CD8-positive, alpha-beta T cell (primary cell): ENCODE measurements at regions of chr7 and their contacts with region 1.

Region 1: DNA sequence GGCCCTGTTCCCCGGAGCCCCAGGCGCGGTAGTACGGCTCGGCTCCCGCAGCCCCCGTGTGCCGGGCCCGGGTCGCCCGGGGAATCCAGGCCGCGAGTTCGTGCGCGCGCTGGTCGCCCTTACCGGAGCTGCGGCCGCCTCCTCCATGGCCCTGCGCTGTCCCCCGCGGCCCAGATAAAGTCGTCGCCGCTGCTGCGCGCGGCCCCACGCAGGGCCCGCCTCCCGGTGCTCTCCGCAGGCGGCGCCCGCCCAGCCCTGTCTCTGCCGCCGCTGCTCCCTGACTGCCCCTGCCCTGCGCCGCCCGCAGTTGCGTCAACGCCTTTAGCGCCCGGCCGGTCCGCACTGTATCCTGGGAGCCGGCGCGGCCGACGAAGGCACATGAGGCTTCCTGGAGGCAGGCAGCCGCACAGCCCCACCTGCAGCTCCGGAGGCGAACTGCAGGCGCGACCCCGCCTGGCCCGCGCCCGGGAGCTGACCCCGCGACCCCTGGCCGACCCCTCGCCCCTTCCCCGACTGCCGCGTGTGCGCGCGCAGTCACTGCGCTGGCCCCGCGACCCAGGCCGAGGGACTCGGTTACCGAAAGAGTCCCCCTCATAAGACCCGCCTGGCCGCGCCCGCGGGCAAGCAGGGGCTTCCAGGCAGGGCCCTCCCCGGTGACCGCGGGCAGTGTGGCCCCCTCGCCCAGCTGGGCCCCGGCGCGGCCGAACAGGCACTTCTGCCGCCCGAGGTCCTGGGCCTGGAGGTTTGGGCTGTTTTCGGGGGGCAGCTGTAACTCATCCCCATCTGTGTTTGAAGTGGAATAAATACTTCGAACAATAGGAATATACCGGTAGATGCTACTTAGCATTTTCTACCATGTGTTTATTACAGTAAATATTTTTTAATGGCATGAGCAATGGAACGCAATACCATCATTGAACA is 127.1 kb upstream of the ZNF746 start:
- DNase-seq: peak; percentile 84 to 96 (median 90)
- ATAC-seq: peak; percentile 84
- H3K4me3 ChIP-seq: peak overlapping the region; percentile 68 to 86
- H3K4me3 Mint-ChIP-seq: peak overlapping the region; percentile 93
- H3K27ac ChIP-seq: peak overlapping the region; percentile 46 to 68
- H3K27ac Mint-ChIP-seq: peak overlapping the region; percentile 93
- H3K4me1 ChIP-seq: peaks cover 27% of the 10 kb centered on the region
- H3K4me1 Mint-ChIP-seq: peaks cover 41% of the 10 kb centered on the region
- H3K27me3 ChIP-seq: no peaks in the 10 kb centered on the region
- H3K27me3 Mint-ChIP-seq: peaks cover 3% of the 10 kb centered on the region
- CTCF ChIP-seq: peak; percentile 99

Region 2: DNA sequence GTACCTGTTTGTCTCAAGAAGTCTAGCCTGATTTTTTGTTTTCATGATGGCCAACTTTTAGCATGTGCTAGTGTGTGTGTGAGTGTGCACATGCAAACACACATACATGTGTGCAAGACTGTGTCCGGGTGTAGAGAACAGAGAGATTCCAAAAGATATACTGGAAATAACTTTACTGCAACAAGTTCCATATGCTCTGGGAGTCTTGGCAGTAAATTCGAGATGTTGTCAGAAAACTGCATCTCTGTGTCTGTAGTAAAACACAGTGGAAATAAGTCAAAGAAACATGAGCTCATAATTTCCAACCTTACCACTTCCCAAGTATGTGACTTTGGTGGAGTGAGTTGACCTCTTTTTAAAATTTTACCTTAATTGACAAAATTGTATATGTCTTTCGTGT is 1984.9 kb before region 1 on chr7:
- CTCF ChIA-PET with region 1: no interaction called
- POLR2A ChIA-PET with region 1: no interaction called
- intact Hi-C with region 1: no loop called
- DNase-seq: no peak
- ATAC-seq: no peak
- H3K4me3 ChIP-seq: no peak overlapping the region
- H3K4me3 Mint-ChIP-seq: no peak overlapping the region
- H3K27ac ChIP-seq: no peak overlapping the region
- H3K27ac Mint-ChIP-seq: no peak overlapping the region
- H3K4me1 ChIP-seq: no peaks in the 10 kb centered on the region
- H3K4me1 Mint-ChIP-seq: no peaks in the 10 kb centered on the region
- H3K27me3 ChIP-seq: no peaks in the 10 kb centered on the region
- H3K27me3 Mint-ChIP-seq: no peaks in the 10 kb centered on the region
- CTCF ChIP-seq: no peak

Region 3: DNA sequence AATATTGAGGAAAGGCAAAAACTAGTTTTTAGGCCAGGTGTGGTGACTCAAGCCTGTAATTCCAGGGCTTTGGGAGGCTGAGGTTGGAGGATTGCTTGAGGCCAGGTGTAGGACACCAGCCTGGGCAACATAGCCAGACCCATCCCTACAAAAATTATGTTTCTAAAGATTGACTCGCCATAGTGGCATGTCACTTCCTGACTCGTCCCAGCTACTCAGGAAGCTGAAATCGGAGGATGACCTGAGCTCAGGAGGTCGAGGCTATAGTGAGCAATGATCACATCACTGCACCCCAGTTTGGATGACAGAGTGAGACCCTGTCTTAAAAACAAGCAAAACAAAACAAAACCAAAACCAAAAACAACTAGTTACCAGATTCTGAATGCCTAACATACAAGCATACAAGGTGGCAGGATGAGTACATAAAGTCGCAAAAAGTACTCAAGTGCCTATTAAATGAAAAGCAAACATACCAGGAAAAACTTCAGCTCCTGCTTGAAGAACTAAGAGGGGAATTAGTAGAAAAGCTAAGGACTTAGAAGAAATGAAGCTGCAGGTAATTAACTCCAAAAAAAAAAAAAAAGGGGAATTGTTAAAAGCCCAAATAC is 463.3 kb before region 1 on chr7:
- CTCF ChIA-PET with region 1: no interaction called
- POLR2A ChIA-PET with region 1: no interaction called
- intact Hi-C with region 1: no loop called
- DNase-seq: no peak
- ATAC-seq: no peak
- H3K4me3 ChIP-seq: no peak overlapping the region
- H3K4me3 Mint-ChIP-seq: no peak overlapping the region
- H3K27ac ChIP-seq: no peak overlapping the region
- H3K27ac Mint-ChIP-seq: peak overlapping the region; percentile 60
- H3K4me1 ChIP-seq: no peaks in the 10 kb centered on the region
- H3K4me1 Mint-ChIP-seq: peaks cover 14% of the 10 kb centered on the region
- H3K27me3 ChIP-seq: no peaks in the 10 kb centered on the region
- H3K27me3 Mint-ChIP-seq: no peaks in the 10 kb centered on the region
- CTCF ChIP-seq: no peak

Region 4: DNA sequence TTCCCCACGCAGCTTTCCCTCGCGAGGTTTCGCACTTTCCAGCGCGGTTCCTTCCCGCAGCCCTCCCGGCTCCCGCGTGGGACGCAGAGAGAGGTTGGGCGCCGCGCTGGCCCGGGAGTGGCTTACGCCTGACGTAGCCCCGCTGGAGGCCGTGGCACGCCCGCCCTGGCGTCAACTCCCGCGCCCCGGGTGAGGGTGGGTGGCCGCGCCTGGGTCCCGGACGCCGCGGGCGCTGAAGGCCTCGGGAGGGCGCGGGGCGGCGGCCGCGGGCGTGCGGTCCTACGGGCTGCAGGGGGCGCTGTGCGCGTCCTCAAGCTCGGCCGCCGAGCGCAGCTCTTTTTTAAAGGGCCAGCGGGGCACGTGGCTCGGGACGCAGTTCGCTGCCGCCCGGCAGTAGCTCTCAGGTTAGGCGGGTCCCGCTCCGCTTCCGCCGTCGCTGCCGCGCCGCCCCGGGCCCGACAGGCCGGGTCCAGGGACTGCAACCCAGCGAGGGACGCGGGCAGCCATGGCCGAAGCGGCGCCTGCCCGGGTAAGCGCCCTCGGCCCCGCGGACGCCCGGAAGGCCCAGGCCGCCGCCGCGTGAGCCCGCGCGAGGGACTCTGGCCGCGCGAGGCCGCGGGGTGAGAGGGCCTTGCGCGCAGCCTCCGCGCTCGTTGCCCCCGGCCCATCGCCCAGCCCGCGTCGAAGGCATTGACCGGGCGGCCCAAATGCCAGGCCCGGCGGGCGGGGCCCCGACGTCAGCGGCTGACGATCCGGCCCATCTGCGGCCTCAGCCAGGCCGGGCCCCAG is 362.7 kb before region 1 on chr7 and contains the start of gene ZNF783:
- CTCF ChIA-PET with region 1: interaction called, 3 read pairs
- POLR2A ChIA-PET with region 1: no interaction called
- intact Hi-C with region 1: loop called in 1 of 2 experiments (anchors 10 kb)
- DNase-seq: peak; percentile 68 to 96 (median 83)
- ATAC-seq: peak; percentile 93
- H3K4me3 ChIP-seq: peak within 1 kb of the TSS; percentile 69
- H3K4me3 Mint-ChIP-seq: peak within 1 kb of the TSS; percentile 86
- H3K27ac ChIP-seq: peak within 1 kb of the TSS; percentile 50 to 83
- H3K27ac Mint-ChIP-seq: peak within 1 kb of the TSS; percentile 94
- H3K4me1 ChIP-seq: peaks cover 30% of the 10 kb centered on the region
- H3K4me1 Mint-ChIP-seq: peaks cover 37% of the 10 kb centered on the region
- H3K27me3 ChIP-seq: no peaks in the 10 kb centered on the region
- H3K27me3 Mint-ChIP-seq: no peaks in the 10 kb centered on the region
- CTCF ChIP-seq: peak; percentile 87
- total RNA-seq, gene ZNF783: 24.0 to 27.3 TPM

Region 5: DNA sequence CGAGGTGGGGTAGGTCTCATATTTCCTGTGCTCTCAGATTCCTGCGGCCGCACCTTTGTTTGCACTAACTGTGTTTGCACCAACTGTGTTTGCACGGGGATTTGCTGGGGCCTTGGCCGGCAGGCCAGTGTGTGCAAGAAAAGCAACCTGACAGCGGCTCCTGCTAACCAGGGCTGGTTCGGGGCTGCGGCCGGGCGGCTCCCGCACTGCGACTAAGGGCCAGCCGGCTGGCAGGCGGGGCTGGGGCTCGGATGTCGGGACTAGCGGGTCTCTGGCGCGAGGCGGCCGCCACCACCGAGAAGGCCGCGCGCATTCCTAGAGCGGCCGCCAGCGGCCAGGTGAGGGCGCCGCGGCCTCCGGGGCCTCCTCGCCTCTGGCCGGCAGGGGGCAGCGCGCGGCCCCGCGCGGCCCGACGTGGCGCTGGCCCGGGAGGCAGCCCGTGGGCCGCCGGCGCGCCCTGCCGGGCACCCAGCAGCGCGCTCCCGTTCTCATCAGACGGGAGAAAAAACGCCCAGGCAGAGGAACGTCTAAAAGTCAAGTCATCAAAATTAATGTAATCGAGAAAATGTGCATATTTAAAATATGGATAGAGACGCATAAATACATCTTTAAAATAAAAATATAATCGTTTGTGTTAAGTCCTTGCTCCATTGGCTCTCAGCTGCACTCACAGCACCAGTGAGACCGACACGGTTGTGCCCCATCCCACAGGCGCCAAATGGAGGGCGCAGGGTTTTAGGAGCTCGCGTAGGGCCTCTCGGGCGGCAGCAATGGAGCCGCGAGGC is 202.4 kb before region 1 on chr7:
- CTCF ChIA-PET with region 1: interaction called, 3 read pairs
- POLR2A ChIA-PET with region 1: interaction called, 5 read pairs
- intact Hi-C with region 1: loop called (anchors 1 to 2 kb)
- DNase-seq: peak; percentile 50 to 91 (median 66)
- ATAC-seq: peak; percentile 97
- H3K4me3 ChIP-seq: peak overlapping the region; percentile 71 to 76
- H3K4me3 Mint-ChIP-seq: peak overlapping the region; percentile 76
- H3K27ac ChIP-seq: peak overlapping the region; percentile 60 to 82
- H3K27ac Mint-ChIP-seq: peak overlapping the region; percentile 75
- H3K4me1 ChIP-seq: peaks cover 5% of the 10 kb centered on the region
- H3K4me1 Mint-ChIP-seq: peaks cover 12% of the 10 kb centered on the region
- H3K27me3 ChIP-seq: no peaks in the 10 kb centered on the region
- H3K27me3 Mint-ChIP-seq: no peaks in the 10 kb centered on the region
- CTCF ChIP-seq: no peak

Region 6: GRCh38 chr7:149714050-149714909 is 89.6 kb after region 1 on chr7:
- CTCF ChIA-PET with region 1: no interaction called
- POLR2A ChIA-PET with region 1: no interaction called
- intact Hi-C with region 1: loop called in 1 of 2 experiments (anchors 2 kb)
- DNase-seq: peak; percentile 86 to 97 (median 94)
- ATAC-seq: peak; percentile 95
- H3K4me3 ChIP-seq: peak overlapping the region; percentile 65 to 68
- H3K4me3 Mint-ChIP-seq: peak overlapping the region; percentile 80
- H3K27ac ChIP-seq: peak overlapping the region; percentile 12
- H3K27ac Mint-ChIP-seq: peak overlapping the region; percentile 22
- H3K4me1 ChIP-seq: peaks cover 18% of the 10 kb centered on the region
- H3K4me1 Mint-ChIP-seq: peaks cover 23% of the 10 kb centered on the region
- H3K27me3 ChIP-seq: no peaks in the 10 kb centered on the region
- H3K27me3 Mint-ChIP-seq: no peaks in the 10 kb centered on the region
- CTCF ChIP-seq: no peak

Region 7: GRCh38 chr7:151057989-151058780 is 1433.5 kb after region 1 on chr7:
- CTCF ChIA-PET with region 1: no interaction called
- POLR2A ChIA-PET with region 1: no interaction called
- intact Hi-C with region 1: loop called in 1 of 2 experiments (anchors 10 kb)
- DNase-seq: peak; percentile 93 to 100 (median 97)
- ATAC-seq: peak; percentile 93
- H3K4me3 ChIP-seq: peak overlapping the region; percentile 71 to 83
- H3K4me3 Mint-ChIP-seq: peak overlapping the region; percentile 78
- H3K27ac ChIP-seq: peak overlapping the region; percentile 65 to 87
- H3K27ac Mint-ChIP-seq: peak overlapping the region; percentile 89
- H3K4me1 ChIP-seq: peaks cover 34% of the 10 kb centered on the region
- H3K4me1 Mint-ChIP-seq: peaks cover 41% of the 10 kb centered on the region
- H3K27me3 ChIP-seq: no peaks in the 10 kb centered on the region
- H3K27me3 Mint-ChIP-seq: no peaks in the 10 kb centered on the region
- CTCF ChIP-seq: no peak